HCT116 (cell line): ENCODE measurements at regions of chr18 and their contacts with region 1.

Region 1: DNA sequence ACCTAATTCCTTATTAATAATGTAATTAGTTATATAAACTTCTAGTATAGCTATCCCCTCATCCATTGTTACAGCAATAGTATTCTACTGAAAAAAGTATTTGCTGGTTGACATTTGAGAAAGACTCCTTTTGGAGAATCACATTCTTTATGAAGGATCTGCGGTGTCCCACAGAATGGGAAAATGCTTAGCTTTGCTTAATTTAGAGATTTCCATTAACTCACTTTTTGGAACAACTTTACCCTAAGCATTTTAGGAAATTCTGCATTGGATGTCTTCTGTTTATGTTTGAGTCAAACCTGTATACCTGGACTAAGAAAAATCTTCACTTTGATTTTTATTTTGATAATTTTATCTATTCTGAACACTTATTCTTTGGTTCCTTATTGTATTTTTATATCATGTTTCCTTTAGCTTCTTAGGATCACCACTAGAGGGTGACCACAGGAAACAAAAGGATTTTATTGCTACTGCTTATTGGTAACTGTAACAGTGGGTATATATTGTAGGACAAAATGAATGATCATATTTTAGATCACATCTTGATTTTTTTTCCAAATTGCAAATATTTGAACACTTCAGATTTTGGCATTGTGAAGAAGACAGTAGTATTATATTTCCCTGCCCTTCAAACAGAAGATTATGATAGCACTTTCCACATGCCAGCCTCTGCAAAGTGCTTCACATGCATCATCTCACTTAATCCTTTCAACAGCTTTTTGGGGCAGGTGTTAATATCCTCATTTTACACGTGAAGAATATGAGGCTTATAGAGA is 79.6 kb downstream of the MIB1 start:
- DNase-seq: peak; percentile 7
- ATAC-seq: peak; percentile 57; the same call in 1 of the 2 replicates
- H3K4me3 ChIP-seq: no peak overlapping the region
- H3K27ac ChIP-seq: no peak overlapping the region
- H3K4me1 ChIP-seq: no peaks in the 10 kb centered on the region
- H3K27me3 ChIP-seq: no peaks in the 10 kb centered on the region
- CTCF ChIP-seq: peak; percentile 20 to 71 (median 56); a peak in 5 of 6 replicates
- POLR2A ChIP-seq: no peak
- RAD21 ChIP-seq: peak; percentile 24; the same call in 1 of the 2 replicates

Region 2: GRCh38 chr18:21831413-21831831 is 11.2 kb after region 1 on chr18:
- CTCF ChIA-PET with region 1: interaction called, 17 read pairs
- POLR2A ChIA-PET with region 1: no interaction called
- RAD21 ChIA-PET with region 1: no interaction called
- intact Hi-C with region 1: no loop called
- DNase-seq: no peak
- ATAC-seq: no peak
- H3K4me3 ChIP-seq: no peak overlapping the region
- H3K27ac ChIP-seq: no peak overlapping the region
- H3K4me1 ChIP-seq: no peaks in the 10 kb centered on the region
- H3K27me3 ChIP-seq: no peaks in the 10 kb centered on the region
- CTCF ChIP-seq: no peak
- POLR2A ChIP-seq: no peak
- RAD21 ChIP-seq: no peak